Naive thymus-derived CD8-positive, alpha-beta T cell (primary cell): ENCODE measurements at regions of chr12 and their contacts with region 1.

Region 1: GRCh38 chr12:92912052-92912451 is 17.0 kb downstream of the EEA1 start:
- DNase-seq: no peak
- ATAC-seq: peak in 1 of 2 donors; percentile 36
- H3K4me3 Mint-ChIP-seq: peak overlapping the region in 7 of 10 donors; percentile 6 to 47 (median 35)
- H3K27ac Mint-ChIP-seq: peak overlapping the region; percentile 36 to 94 (median 78)
- H3K4me1 Mint-ChIP-seq: peaks cover 26 to 66% (median 57%) of the 10 kb centered on the region in 4 donors
- H3K27me3 Mint-ChIP-seq: no peaks in the 10 kb centered on the region

Region 2: DNA sequence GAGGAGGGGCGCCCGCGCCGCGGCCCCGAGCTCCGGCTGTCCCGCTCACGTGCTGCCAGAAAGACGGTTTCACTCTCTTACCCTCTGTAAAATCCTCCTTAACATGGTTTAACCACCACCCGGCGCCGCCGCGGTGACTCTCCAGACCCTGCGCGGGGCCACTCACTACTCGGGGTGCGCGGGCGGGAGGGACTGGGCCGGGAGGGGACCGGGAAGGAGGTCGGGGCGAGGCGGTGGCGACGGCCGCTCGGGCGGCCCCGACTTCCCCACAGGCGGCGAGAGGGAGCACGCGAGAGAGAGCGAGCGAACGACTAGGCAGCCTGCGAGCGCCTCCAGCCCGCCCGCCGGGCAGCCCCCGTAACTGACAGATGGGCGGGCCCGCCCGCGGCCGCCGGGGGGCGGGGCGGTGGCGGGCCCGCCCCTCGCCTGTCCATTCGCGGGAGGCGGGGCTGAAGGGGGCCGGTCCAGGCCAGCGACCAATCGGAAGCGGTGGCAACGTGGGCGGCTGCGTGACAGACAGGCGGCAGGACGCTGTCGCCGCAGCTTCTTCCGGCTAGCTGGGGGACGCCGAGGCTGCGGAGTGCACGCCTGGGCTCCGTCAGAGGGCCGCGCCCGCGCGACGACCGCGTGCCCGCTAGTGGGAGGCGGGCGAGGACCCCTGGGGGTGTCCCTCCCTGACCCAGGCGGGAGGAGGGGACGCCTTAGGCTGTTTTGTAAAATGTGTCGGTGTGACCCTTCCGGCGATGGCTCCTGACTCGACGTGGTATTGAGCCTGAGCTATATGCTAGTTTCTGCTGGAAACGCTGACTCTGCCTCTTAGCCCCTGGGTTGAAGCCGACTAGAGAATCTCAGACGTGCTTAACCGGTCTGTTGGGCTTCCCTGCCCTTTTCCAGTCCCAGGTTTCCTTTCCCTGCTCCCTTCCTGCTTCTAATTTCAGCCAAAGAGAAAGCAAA is 17.2 kb after region 1 on chr12 and contains the start of gene EEA1:
- POLR2A ChIA-PET with region 1: interaction called, 56 read pairs
- DNase-seq: peak; percentile 87 to 97 (median 94)
- ATAC-seq: peak; percentile 81 to 84
- H3K4me3 Mint-ChIP-seq: peak within 1 kb of the TSS; percentile 80 to 94 (median 91)
- H3K27ac Mint-ChIP-seq: peak within 1 kb of the TSS; percentile 85 to 98 (median 96)
- H3K4me1 Mint-ChIP-seq: peaks cover 16 to 43% (median 35%) of the 10 kb centered on the region in 4 donors
- H3K27me3 Mint-ChIP-seq: no peaks in the 10 kb centered on the region
- polyA plus RNA-seq, gene EEA1: 6.8 to 13.3 (median 7.9) TPM